H1 (cell line): ENCODE measurements at regions of chr20 and their contacts with region 1.

Region 1: DNA sequence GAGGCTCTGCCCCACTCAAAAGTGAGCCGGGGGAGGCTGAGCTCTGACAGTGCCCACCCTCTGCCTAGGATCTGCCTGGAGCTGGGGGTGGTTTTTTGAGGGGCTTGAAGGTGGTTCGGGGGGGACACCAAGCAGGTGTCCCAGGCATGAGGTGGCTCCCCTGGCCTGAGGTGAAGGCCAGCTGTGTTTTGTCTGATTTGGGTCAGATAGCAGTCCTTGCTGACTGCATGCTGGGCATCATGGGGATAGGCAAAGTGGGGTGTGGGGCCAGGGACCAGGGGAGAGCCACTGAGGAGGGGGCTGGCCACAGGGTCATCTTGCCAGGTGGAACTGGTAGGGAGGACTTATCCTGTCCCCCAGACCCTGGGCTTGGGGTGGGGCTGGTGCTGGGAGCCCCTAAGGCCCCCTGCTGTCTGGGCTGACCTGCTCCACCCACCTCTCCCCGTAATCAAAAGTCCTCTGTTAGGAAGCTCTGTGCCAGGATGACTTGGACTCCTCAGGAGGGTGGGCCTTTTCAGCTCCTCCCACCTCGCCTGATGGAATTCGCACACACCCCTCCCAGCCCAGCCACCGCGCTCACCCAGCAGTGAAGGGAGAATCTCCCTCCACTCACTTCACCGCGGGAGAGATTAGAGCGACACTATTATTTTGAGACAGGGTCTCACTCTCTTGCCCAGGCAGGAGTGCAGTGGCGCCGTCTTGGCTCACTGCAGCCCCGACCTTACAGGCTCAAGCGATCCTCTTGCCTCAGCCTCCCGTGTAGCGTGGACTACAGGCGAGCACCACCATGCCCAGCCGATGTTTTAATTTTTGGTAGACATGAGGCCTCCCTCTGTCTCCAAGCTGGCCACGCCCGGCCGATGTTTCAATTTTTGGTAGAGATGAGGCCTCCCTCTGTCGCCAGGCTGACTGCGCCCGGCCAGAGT is 1.5 kb upstream of the COL9A3 start:
- DNase-seq: peak; percentile 54 to 73
- H3K4me3 ChIP-seq: peak overlapping the region; percentile 54 to 71 (median 63)
- H3K27ac ChIP-seq: no peak overlapping the region; the same call in 1 of the 2 replicates
- H3K4me1 ChIP-seq: peaks cover 0 to 17% (median 11%) of the 10 kb centered on the region in 4 experiments; a peak in 5 of 7 replicates
- H3K27me3 ChIP-seq: peaks cover 0 to 8% (median 2%) of the 10 kb centered on the region in 4 experiments; a peak in 2 of 7 replicates
- CTCF ChIP-seq: no peak
- EP300 ChIP-seq: no peak
- POLR2A ChIP-seq: no peak
- RAD21 ChIP-seq: no peak

Region 2: DNA sequence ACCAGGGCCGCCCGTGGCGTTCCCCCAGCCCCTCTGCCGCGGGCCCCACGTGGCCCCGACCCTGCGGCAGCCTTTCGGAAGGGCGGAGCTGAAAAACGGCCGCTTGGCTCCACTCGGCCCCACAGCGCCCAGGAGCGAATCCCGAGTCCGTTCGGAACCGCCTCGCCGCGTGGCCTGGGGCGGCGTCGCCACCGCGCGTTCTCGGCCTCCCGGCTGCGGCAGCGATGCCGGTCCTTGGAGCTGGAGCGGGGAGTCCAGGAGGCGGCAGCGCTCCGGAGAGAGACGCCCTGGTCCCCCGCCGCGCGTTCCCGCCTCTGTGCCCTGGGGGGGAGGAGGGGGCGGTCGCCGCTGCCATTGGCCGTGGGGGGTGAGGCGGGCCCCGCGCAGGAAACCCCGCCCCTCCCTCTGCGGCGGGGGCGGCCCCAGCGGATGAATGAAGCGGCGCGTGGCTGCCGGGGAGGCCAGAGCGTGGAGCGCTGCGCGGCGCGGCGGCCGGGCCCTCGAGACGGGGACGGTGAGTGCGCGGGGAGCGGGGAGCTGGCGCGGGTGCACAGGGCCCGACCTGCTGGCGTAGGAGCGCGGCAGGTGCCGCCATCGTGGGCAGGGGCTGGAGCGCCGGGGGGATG is 173.2 kb before region 1 on chr20 and contains the start of gene SLCO4A1:
- CTCF ChIA-PET with region 1: no interaction called
- POLR2A ChIA-PET with region 1: interaction called, 11 read pairs
- DNase-seq: peak in 1 of 2 experiments; percentile 84
- H3K4me3 ChIP-seq: peak within 1 kb of the TSS; percentile 45 to 75 (median 64)
- H3K27ac ChIP-seq: no peak within 1 kb of the TSS
- H3K4me1 ChIP-seq: peaks cover 0 to 11% (median 0%) of the 10 kb centered on the region in 4 experiments; a peak in 3 of 7 replicates
- H3K27me3 ChIP-seq: peaks cover 3 to 43% (median 33%) of the 10 kb centered on the region in 4 experiments; a peak in 6 of 7 replicates
- CTCF ChIP-seq: no peak
- EP300 ChIP-seq: no peak
- POLR2A ChIP-seq: no peak
- RAD21 ChIP-seq: no peak
- total RNA-seq, gene SLCO4A1: 18.2 and 18.5 TPM in 2 replicates

Region 3: GRCh38 chr20:62832212-62832922 is 17.0 kb after region 1 on chr20:
- CTCF ChIA-PET with region 1: no interaction called
- POLR2A ChIA-PET with region 1: interaction called, 22 read pairs
- DNase-seq: no peak
- H3K4me3 ChIP-seq: no peak overlapping the region
- H3K27ac ChIP-seq: no peak overlapping the region
- H3K4me1 ChIP-seq: peaks cover 0 to 10% (median 0%) of the 10 kb centered on the region in 4 experiments; a peak in 2 of 7 replicates
- H3K27me3 ChIP-seq: no peaks in the 10 kb centered on the region
- CTCF ChIP-seq: no peak
- EP300 ChIP-seq: no peak
- POLR2A ChIP-seq: no peak
- RAD21 ChIP-seq: no peak